ENCODE measurements at regions of chr12 and their contacts with region 1.

Region 1: DNA sequence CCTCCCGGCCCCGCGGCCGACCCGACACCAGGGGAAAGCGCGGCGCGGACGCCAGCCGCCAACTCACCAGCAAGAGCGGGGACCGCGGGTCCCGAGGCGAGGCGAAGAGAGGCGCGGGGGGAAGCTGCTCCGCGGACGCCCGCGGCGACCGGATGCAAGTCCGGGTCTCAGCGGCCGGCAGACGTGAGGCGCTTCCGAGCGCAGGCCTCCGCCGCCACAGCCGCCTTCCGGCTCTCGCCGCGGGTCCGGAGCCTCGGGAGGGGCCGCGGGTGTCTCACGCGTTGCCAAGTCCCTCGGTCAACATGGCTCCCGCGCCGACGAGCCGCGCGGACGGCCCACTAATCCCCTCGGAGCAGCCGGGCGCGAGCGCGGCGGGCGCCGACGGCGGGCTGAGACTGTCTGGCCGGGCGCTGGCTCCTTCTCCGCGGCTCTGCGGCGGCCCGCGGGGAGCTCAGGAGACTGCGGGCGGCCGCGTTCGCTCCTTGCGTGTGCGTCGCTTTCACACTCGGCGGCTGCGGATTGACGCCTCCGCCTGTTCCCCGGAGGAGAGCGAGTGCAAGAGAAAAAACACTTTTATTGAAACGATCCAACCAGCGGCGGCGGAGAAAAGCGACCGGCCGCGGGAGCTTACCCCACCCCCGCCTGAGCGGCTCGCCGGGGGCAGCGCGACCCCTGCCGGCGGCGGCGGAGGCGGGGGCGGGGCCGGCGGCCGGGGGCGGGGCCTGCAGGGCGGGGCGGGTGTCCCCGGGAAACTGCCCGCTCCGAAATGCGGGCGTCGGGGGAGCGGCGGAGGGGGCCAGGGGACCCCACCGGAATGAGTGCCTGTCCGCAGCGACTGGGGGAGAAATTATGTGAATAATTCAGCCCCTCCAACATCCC is at the start of gene CDK17:
- DNase-seq: peak; percentile 82 to 97 (median 88)
- ATAC-seq: peak; percentile 63
- H3K4me3 ChIP-seq: peak within 1 kb of the TSS; percentile 88
- H3K4me3 Mint-ChIP-seq: peak within 1 kb of the TSS; percentile 99
- H3K27ac ChIP-seq: peak within 1 kb of the TSS; percentile 86 to 99
- H3K27ac Mint-ChIP-seq: peak within 1 kb of the TSS; percentile 93
- H3K4me1 ChIP-seq: peaks cover 15% of the 10 kb centered on the region
- H3K4me1 Mint-ChIP-seq: peaks cover 49% of the 10 kb centered on the region
- H3K27me3 ChIP-seq: no peaks in the 10 kb centered on the region
- H3K27me3 Mint-ChIP-seq: no peaks in the 10 kb centered on the region
- CTCF ChIP-seq: no peak
- total RNA-seq, gene CDK17: 112 to 113 TPM

Region 2: GRCh38 chr12:95164656-95165055 is 1235.5 kb before region 1 on chr12:
- CTCF ChIA-PET with region 1: no interaction called
- POLR2A ChIA-PET with region 1: no interaction called
- intact Hi-C with region 1: no loop called
- DNase-seq: no peak
- ATAC-seq: no peak
- H3K4me3 ChIP-seq: no peak overlapping the region
- H3K4me3 Mint-ChIP-seq: no peak overlapping the region
- H3K27ac ChIP-seq: no peak overlapping the region
- H3K27ac Mint-ChIP-seq: no peak overlapping the region
- H3K4me1 ChIP-seq: no peaks in the 10 kb centered on the region
- H3K4me1 Mint-ChIP-seq: no peaks in the 10 kb centered on the region
- H3K27me3 ChIP-seq: no peaks in the 10 kb centered on the region
- H3K27me3 Mint-ChIP-seq: no peaks in the 10 kb centered on the region
- CTCF ChIP-seq: no peak

Region 3: DNA sequence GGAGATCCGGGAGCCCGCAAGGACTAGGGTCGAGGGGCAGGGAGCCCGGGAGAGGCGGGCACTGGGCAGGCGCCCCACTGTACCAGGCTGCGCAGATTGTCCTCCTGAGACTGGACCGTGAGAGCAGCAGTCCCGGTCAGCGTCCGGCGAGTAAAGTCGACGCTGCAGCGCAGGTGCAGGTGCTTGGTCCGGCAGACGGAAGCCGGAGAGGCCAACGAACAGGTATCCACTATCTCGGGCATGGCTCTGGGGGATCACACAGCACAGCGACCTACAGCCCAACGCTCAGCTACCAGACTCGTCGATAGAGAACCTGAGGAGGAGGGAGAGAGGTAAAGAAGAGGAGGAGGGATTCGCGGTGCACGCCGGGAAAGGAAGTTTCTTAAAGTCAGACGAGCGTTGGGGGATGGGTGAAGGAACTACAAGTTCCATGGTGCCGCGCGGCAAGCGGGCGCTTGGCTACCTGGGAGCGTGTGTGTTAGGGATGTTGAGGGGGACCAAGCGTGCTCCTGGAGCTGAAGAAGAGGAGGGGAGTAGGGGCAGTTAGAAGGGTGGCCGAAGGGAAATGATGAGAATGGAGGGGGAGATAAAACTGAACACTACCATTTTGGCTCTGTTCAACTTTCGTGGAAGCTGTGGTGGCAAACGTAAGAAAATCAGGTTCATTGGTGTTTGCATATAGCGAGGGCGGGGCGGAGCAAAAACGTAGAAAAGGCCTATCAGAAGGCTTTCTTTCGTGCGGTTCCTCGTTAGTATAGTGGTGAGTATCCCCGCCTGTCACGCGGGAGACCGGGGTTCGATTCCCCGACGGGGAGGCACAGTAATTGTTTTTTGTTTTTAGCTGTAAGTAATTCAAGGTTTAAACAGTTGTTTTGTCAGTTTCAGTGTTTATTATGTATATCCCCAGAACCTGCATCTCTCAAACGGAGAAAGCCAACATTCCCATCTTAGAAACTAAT is 364.6 kb before region 1 on chr12 and contains the start of gene LTA4H:
- CTCF ChIA-PET with region 1: no interaction called
- POLR2A ChIA-PET with region 1: interaction called, 13 read pairs
- intact Hi-C with region 1: loop called (anchors 1 to 10 kb)
- DNase-seq: peak; percentile 92 to 99 (median 96)
- ATAC-seq: peak; percentile 93
- H3K4me3 ChIP-seq: peak within 1 kb of the TSS; percentile 89
- H3K4me3 Mint-ChIP-seq: no peak within 1 kb of the TSS
- H3K27ac ChIP-seq: peak within 1 kb of the TSS; percentile 59 to 60
- H3K27ac Mint-ChIP-seq: no peak within 1 kb of the TSS
- H3K4me1 ChIP-seq: peaks cover 20% of the 10 kb centered on the region
- H3K4me1 Mint-ChIP-seq: peaks cover 11% of the 10 kb centered on the region
- H3K27me3 ChIP-seq: no peaks in the 10 kb centered on the region
- H3K27me3 Mint-ChIP-seq: no peaks in the 10 kb centered on the region
- CTCF ChIP-seq: no peak
- total RNA-seq, gene LTA4H: 43.0 to 44.0 TPM

Region 4: GRCh38 chr12:96219698-96220206 is 180.4 kb before region 1 on chr12:
- CTCF ChIA-PET with region 1: interaction called, 27 read pairs
- POLR2A ChIA-PET with region 1: interaction called, 18 read pairs
- intact Hi-C with region 1: loop called in 1 of 2 experiments (anchors 2 kb)
- DNase-seq: peak in 2 of 14 experiments; percentile 24 to 45
- ATAC-seq: no peak
- H3K4me3 ChIP-seq: no peak overlapping the region
- H3K4me3 Mint-ChIP-seq: no peak overlapping the region
- H3K27ac ChIP-seq: no peak overlapping the region
- H3K27ac Mint-ChIP-seq: peak overlapping the region; percentile 33
- H3K4me1 ChIP-seq: peaks cover 32% of the 10 kb centered on the region
- H3K4me1 Mint-ChIP-seq: peaks cover 52% of the 10 kb centered on the region
- H3K27me3 ChIP-seq: no peaks in the 10 kb centered on the region
- H3K27me3 Mint-ChIP-seq: no peaks in the 10 kb centered on the region
- CTCF ChIP-seq: no peak

Region 5: DNA sequence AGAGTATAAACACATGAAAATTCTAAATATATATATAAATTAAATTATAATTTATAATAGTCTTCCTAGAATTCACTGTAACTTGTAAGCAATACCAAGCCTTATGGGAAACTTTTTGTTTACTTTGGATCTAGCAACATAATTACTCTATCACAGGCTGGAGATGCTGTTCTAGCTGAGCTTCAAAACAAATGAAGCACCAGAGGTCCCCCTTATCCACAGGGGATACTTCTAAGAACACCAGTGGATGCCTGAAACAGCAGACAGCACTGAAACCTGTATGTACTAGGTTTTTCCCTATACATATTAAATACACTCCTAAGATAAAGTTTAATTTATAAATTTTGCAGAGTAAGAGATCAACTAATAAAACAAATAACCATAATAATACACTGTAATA is 96.5 kb before region 1 on chr12:
- CTCF ChIA-PET with region 1: interaction called, 5 read pairs
- POLR2A ChIA-PET with region 1: interaction called, 15 read pairs
- intact Hi-C with region 1: loop called in 1 of 2 experiments (anchors 5 kb)
- DNase-seq: no peak
- ATAC-seq: no peak
- H3K4me3 ChIP-seq: no peak overlapping the region
- H3K4me3 Mint-ChIP-seq: no peak overlapping the region
- H3K27ac ChIP-seq: no peak overlapping the region
- H3K27ac Mint-ChIP-seq: no peak overlapping the region
- H3K4me1 ChIP-seq: no peaks in the 10 kb centered on the region
- H3K4me1 Mint-ChIP-seq: peaks cover 35% of the 10 kb centered on the region
- H3K27me3 ChIP-seq: no peaks in the 10 kb centered on the region
- H3K27me3 Mint-ChIP-seq: no peaks in the 10 kb centered on the region
- CTCF ChIP-seq: no peak

Region 6: DNA sequence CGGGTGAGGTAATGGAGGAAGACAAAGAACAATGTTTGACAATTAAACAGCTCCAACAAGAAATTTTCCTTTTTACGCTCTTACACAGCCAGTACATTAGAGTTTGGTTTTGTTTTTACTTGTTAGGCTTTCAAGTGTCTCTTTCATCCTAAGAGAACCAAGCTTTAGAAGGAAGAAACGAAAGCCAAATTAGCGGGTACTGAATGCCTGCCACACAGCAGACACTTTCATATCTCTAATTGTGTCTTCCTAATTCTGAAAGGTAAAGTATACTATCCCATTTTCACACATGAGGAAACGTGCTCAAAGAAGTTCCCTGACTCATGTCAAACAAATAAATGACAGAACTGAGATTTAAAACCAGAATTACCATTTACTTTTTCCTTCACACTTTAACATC is 64.9 kb before region 1 on chr12:
- CTCF ChIA-PET with region 1: interaction called, 6 read pairs
- POLR2A ChIA-PET with region 1: interaction called, 49 read pairs
- intact Hi-C with region 1: loop called in 1 of 2 experiments (anchors 5 kb)
- DNase-seq: peak in 3 of 14 experiments; percentile 25 to 29 (median 27)
- ATAC-seq: peak; percentile 59
- H3K4me3 ChIP-seq: no peak overlapping the region
- H3K4me3 Mint-ChIP-seq: peak overlapping the region; percentile 68
- H3K27ac ChIP-seq: peak overlapping the region in 1 of 2 donors; percentile 29
- H3K27ac Mint-ChIP-seq: peak overlapping the region; percentile 17
- H3K4me1 ChIP-seq: peaks cover 3% of the 10 kb centered on the region
- H3K4me1 Mint-ChIP-seq: peaks cover 72% of the 10 kb centered on the region
- H3K27me3 ChIP-seq: no peaks in the 10 kb centered on the region
- H3K27me3 Mint-ChIP-seq: no peaks in the 10 kb centered on the region
- CTCF ChIP-seq: no peak

Region 7: DNA sequence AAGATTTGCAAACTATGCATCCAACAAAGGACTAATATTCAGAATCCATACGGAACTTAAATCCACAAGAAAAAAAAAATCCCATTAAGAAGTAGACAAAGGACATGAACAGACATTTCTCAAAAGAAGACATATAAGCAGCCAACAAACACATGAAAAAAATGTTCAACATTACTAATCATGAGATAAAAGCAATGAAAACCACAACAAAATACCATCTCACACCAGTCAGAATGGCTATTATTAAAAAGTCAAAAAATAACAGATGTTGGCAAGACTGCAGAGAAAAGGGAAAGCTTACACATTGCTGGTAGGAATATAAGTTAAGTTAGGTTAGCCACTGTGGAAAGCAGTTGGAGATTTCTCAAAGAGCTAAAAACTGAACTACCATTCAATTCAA is 16.2 kb before region 1 on chr12:
- CTCF ChIA-PET with region 1: interaction called, 21 read pairs
- POLR2A ChIA-PET with region 1: interaction called, 98 read pairs
- intact Hi-C with region 1: loop called (anchors 2 kb)
- DNase-seq: no peak
- ATAC-seq: no peak
- H3K4me3 ChIP-seq: no peak overlapping the region
- H3K4me3 Mint-ChIP-seq: peak overlapping the region; percentile 65
- H3K27ac ChIP-seq: no peak overlapping the region
- H3K27ac Mint-ChIP-seq: peak overlapping the region; percentile 40
- H3K4me1 ChIP-seq: peaks cover 43% of the 10 kb centered on the region
- H3K4me1 Mint-ChIP-seq: peaks cover 77% of the 10 kb centered on the region
- H3K27me3 ChIP-seq: no peaks in the 10 kb centered on the region
- H3K27me3 Mint-ChIP-seq: no peaks in the 10 kb centered on the region
- CTCF ChIP-seq: no peak

Region 8: DNA sequence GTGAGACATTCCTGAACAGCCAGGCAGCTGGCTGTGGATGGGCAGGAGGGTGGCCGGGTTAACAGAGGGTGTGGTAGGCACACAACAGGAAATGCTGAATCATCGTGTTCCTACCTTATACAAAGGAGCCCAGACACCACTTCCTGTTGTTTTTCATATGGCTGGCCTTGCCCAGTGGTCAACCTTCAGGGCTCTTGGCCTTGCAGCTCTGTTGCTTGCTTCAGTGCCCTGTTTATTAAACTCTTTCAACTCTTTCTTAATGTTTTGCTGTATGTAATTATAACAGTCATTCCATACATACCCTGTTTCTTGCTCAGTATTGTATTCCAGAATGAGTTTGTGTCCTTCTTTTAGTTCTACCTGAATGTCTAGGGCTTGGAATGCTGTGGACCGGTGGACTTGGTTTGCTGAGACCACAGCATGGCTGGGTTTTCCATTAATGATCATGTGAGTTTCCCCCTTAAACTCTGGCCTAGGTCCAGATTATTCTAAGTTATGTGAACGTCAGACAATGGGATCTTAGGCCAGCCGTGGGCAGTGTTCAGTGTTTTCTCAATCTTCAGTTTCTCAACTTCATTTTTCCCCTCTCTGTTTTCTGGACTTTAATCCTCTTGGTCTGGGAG is 101.1 kb after region 1 on chr12:
- CTCF ChIA-PET with region 1: interaction called, 22 read pairs
- POLR2A ChIA-PET with region 1: interaction called, 4 read pairs
- intact Hi-C with region 1: loop called in 1 of 2 experiments (anchors 5 kb)
- DNase-seq: peak in 11 of 14 experiments; percentile 17 to 83 (median 41)
- ATAC-seq: peak; percentile 82
- H3K4me3 ChIP-seq: no peak overlapping the region
- H3K4me3 Mint-ChIP-seq: peak overlapping the region; percentile 44
- H3K27ac ChIP-seq: peak overlapping the region in 1 of 2 donors; percentile 62
- H3K27ac Mint-ChIP-seq: peak overlapping the region; percentile 85
- H3K4me1 ChIP-seq: peaks cover 18% of the 10 kb centered on the region
- H3K4me1 Mint-ChIP-seq: peaks cover 53% of the 10 kb centered on the region
- H3K27me3 ChIP-seq: no peaks in the 10 kb centered on the region
- H3K27me3 Mint-ChIP-seq: no peaks in the 10 kb centered on the region
- CTCF ChIP-seq: no peak